ENCODE measurements at regions of chr12 and their contacts with region 1.

Region 1: DNA sequence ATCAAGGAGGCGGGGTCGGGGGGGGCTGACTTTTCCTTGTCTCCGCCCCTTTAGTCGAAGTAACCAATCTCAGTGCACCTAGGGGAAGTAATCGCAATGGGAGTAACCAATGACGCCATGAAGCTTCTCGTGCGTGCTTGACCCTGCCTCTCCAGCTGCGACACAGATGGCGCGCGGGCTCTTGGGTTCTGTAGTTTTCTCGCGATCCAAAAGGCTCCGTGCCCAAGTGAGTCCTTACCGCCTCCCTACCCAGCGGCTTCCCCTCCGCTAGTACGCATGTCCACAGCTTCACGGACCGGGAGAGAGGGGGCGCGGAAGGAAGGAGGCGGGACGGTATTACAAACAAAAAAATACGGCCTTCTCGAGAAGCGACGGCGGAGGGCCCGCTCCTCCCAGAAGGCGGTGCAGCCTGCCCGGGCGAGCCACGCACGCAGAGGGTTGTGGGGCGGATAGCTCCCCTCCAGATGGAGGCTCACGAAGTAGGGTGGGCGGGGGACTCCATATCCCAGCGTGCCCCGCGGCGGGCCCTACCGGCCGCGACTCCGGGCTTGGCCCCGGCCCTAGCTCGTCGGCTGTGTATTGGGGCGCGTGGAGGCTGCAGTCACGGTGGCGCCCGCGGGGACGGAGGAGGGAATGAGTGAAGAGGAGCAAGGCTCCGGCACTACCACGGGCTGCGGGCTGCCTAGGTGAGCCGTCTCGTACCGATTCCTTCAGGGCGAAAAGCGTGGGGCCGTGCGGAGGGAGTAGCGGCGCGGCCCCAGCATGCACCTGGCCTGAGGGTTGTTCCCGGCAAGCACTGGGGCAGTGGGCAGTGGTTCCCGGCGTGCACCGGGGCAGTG is at the start of gene TARBP2:
- DNase-seq: peak; percentile 97 to 100 (median 99)
- H3K4me3 ChIP-seq: peak within 1 kb of the TSS; percentile 75
- H3K27ac ChIP-seq: peak within 1 kb of the TSS; percentile 86 to 99
- H3K4me1 ChIP-seq: peaks cover 23% of the 10 kb centered on the region
- H3K27me3 ChIP-seq: no peaks in the 10 kb centered on the region
- CTCF ChIP-seq: peak in 1 of 3 donors; percentile 7
- EP300 ChIP-seq: peak; percentile 51
- POLR2A ChIP-seq: peak; percentile 65
- total RNA-seq, gene TARBP2: 14.1 to 25.6 (median 21.9) TPM

Region 2: DNA sequence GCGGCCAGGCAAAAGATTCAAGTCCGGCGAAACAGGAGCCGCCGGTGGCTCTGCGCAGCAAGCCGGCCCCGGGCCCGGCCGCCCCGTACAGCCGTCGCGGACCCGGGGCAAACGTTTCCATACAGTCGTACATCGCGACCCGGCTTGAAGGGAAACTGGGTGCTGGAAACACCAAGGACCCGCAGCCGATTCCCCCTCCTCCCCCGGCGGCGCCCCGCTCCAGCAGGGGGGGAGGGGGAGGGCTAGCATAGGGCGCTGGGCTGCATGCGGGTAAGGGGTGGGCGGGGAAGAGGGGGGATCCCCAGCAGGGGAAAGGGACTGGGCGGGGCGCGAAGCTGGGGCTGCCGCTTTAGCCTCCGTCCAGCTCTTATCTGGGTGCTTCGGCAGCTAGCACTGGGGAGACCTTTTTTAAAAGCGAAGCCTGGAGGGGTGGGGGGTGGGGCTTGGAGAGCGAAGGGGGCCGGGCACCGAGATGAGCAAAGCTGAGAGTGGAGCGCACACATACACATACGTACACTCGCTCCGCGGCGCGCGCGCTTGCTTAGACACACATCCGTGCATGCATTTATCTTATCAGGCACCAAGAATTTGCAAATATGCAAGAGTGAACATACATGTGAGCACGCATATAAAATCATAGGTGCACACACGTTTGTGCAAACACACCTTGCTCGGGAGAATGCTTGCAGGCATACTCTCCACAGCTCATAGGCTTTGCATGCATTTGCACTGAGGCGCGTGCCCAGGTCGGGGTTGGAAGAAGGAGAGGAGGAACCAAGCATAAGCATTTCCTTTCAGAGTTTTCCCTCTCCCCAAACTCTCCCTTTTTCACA is 280.8 kb before region 1 on chr12:
- intact Hi-C with region 1: loop called in 1 of 4 experiments (anchors 5 kb)
- DNase-seq: peak in 4 of 5 donors; percentile 54 to 74 (median 68)
- H3K4me3 ChIP-seq: peak overlapping the region; percentile 79
- H3K27ac ChIP-seq: peak overlapping the region; percentile 83 to 99
- H3K4me1 ChIP-seq: peaks cover 21% of the 10 kb centered on the region
- H3K27me3 ChIP-seq: no peaks in the 10 kb centered on the region
- CTCF ChIP-seq: no peak
- EP300 ChIP-seq: no peak
- POLR2A ChIP-seq: no peak

Region 3: GRCh38 chr12:53231826-53232645 is 269.0 kb before region 1 on chr12 and contains the start of gene RARG:
- intact Hi-C with region 1: no loop called
- DNase-seq: peak; percentile 66 to 77 (median 72)
- H3K4me3 ChIP-seq: peak within 1 kb of the TSS; percentile 68
- H3K27ac ChIP-seq: peak within 1 kb of the TSS; percentile 77 to 90
- H3K4me1 ChIP-seq: peaks cover 19% of the 10 kb centered on the region
- H3K27me3 ChIP-seq: no peaks in the 10 kb centered on the region
- CTCF ChIP-seq: peak in 1 of 3 donors; percentile 7
- EP300 ChIP-seq: no peak
- POLR2A ChIP-seq: no peak
- total RNA-seq, gene RARG: 8.7 to 37.0 (median 31.7) TPM

Region 4: DNA sequence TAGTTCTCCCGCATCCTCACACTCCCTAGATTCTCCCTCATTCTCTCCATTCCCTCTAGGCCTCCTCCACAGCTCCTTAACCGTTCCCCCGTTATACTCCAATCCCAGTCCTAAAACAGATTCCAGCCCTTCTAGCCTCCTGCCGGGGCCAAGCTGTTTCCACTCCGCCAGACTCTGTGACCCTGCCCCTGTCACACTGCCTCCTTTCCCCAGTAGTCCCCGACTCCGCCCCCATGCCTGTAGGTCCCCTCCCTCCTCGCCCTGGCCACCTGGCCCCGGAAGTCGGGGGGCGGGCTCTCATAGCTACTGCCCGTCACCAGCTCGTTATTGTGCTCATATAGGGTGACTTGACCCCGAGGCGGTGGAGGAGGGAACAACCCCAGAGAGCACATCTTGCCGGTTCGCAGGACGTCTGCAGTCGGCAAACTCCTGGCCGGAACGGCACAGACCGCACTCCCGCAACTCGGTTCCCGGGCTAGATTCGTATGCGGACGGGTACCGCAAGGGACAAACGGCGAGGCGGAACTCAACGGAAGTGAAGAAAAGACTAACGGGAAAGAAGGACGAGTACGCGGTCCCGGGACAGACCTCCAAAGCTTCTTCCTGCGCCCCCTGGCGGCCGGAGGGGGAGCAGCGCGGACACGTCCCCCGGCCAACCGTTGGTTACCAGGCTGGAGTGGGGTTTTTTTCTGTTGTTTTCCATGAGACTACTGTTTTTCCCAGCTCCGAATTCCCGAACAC is 179.8 kb before region 1 on chr12 and contains the start of gene AAAS:
- intact Hi-C with region 1: loop called (anchors 10 kb)
- DNase-seq: peak; percentile 92 to 96 (median 95)
- H3K4me3 ChIP-seq: peak within 1 kb of the TSS; percentile 69
- H3K27ac ChIP-seq: peak within 1 kb of the TSS; percentile 71 to 76
- H3K4me1 ChIP-seq: peaks cover 9% of the 10 kb centered on the region
- H3K27me3 ChIP-seq: no peaks in the 10 kb centered on the region
- CTCF ChIP-seq: peak; percentile 97 to 99 (median 98)
- EP300 ChIP-seq: peak; percentile 10
- POLR2A ChIP-seq: peak; percentile 46
- total RNA-seq, gene AAAS: 23.4 to 47.6 (median 43.0) TPM

Region 5: DNA sequence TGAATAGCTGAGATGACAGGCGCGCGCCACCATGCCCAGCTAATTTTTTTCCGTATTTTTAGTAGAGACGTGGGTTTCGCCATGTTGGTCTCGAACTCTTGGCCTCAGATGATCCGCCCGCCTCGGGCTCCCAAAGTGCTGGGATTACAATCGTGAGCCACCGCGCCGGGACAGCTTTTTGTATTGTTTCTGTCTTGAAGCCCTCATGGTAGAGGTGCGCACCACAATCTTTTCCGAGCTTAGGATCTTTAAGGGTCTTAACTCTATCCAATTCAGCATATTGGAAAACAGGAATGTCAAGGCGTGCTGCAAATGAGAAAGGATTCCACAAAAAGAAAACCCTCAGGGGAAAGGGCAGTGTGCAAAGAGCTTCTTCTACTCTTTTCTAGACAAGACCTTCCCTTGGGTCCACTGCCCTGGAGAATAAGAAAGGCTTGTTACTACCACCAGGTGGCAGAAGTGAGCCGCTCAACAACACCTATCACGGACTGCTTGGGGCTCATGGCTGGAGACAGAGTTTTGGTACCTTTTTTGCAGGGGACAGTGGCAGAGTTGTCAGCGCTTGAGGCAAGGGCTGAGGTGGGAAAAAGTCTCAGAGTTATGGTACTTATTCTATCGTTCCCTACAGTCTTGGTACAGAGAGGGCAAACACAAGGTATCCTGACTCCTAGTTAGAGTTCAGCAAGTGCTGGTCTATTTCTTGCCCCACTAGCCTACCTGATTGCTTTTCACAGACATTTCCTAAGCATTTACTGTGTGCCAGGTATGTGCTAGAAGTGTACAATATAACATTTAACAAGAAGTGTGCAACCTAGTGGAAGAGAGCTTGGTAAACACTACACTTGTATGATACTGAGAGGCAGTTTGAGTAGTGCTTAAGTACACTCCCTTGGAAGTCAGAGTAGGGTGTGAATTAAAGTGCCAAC is 148.4 kb before region 1 on chr12:
- intact Hi-C with region 1: loop called in 3 of 4 experiments (anchors 5 to 10 kb)
- DNase-seq: peak; percentile 76 to 90 (median 81)
- H3K4me3 ChIP-seq: no peak overlapping the region
- H3K27ac ChIP-seq: no peak overlapping the region
- H3K4me1 ChIP-seq: no peaks in the 10 kb centered on the region
- H3K27me3 ChIP-seq: no peaks in the 10 kb centered on the region
- CTCF ChIP-seq: peak; percentile 83 to 93 (median 92)
- EP300 ChIP-seq: no peak
- POLR2A ChIP-seq: no peak

Region 6: GRCh38 chr12:53441040-53441833 is 59.8 kb before region 1 on chr12 and contains the start of gene PRR13:
- intact Hi-C with region 1: loop called in 1 of 4 experiments (anchors 5 kb)
- DNase-seq: peak; percentile 97 to 99 (median 98)
- H3K4me3 ChIP-seq: peak within 1 kb of the TSS; percentile 75
- H3K27ac ChIP-seq: peak within 1 kb of the TSS; percentile 79 to 85
- H3K4me1 ChIP-seq: peaks cover 5% of the 10 kb centered on the region
- H3K27me3 ChIP-seq: no peaks in the 10 kb centered on the region
- CTCF ChIP-seq: no peak
- EP300 ChIP-seq: no peak
- POLR2A ChIP-seq: peak; percentile 97
- total RNA-seq, gene PRR13: 46.1 to 131 (median 116) TPM

Region 7: GRCh38 chr12:53451661-53452158 is 49.3 kb before region 1 on chr12 and contains the start of gene PCBP2:
- intact Hi-C with region 1: loop called in 2 of 4 experiments (anchors 2 kb)
- DNase-seq: peak; percentile 97 to 98 (median 98)
- H3K4me3 ChIP-seq: peak within 1 kb of the TSS; percentile 92
- H3K27ac ChIP-seq: peak within 1 kb of the TSS; percentile 80 to 93
- H3K4me1 ChIP-seq: peaks cover 2% of the 10 kb centered on the region
- H3K27me3 ChIP-seq: no peaks in the 10 kb centered on the region
- CTCF ChIP-seq: peak; percentile 91 to 97 (median 97)
- EP300 ChIP-seq: no peak
- POLR2A ChIP-seq: peak; percentile 70
- total RNA-seq, gene PCBP2: 413 to 1,163 (median 948) TPM

Region 8: GRCh38 chr12:53701518-53702260 is 200.7 kb after region 1 on chr12:
- intact Hi-C with region 1: no loop called
- DNase-seq: peak; percentile 69 to 90 (median 84)
- H3K4me3 ChIP-seq: no peak overlapping the region
- H3K27ac ChIP-seq: no peak overlapping the region
- H3K4me1 ChIP-seq: no peaks in the 10 kb centered on the region
- H3K27me3 ChIP-seq: no peaks in the 10 kb centered on the region
- CTCF ChIP-seq: peak; percentile 53 to 82 (median 72)
- EP300 ChIP-seq: no peak
- POLR2A ChIP-seq: no peak